PC-3 (cell line): ENCODE measurements at regions of chr5 and their contacts with region 1.

Region 1: DNA sequence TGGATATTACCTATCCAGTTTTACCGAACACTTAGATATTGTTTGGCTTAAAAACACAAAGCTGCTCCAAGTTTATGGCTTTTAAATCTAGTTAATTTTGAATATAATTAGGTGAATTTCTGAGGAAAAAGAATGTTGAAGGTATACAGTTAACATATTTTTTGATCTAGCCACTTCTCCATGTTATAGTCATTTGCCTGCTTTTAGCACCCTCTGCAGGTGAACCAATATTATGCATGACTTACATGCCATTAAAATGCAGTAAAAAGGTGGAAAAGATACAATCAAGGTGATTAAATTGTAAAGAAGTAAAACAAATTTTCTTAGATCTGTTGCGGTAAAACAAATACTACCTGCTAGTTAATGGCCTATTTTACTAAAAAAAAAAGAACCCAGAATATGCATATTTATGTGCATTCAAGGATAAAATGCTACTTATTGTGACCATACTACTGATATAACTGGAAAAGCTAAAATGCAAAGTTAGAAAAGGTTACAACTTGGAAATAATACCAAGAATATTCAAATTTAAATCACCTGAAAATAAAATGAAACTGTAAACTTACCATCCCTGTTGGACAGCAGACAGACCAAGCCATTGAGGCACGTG is 132.1 kb downstream of the AP3B1 start:
- DNase-seq: peak; percentile 7
- ATAC-seq: no peak
- H3K4me3 ChIP-seq: no peak overlapping the region
- H3K27ac ChIP-seq: no peak overlapping the region
- H3K4me1 ChIP-seq: no peaks in the 10 kb centered on the region
- H3K27me3 ChIP-seq: no peaks in the 10 kb centered on the region
- CTCF ChIP-seq: peak; percentile 57

Region 2: GRCh38 chr5:76952795-76953536 is 1209.4 kb before region 1 on chr5 and contains the start of gene CRHBP:
- CTCF ChIA-PET with region 1: no interaction called
- POLR2A ChIA-PET with region 1: no interaction called
- intact Hi-C with region 1: no loop called
- DNase-seq: no peak
- ATAC-seq: no peak
- H3K4me3 ChIP-seq: no peak within 1 kb of the TSS
- H3K27ac ChIP-seq: no peak within 1 kb of the TSS
- H3K4me1 ChIP-seq: no peaks in the 10 kb centered on the region
- H3K27me3 ChIP-seq: no peaks in the 10 kb centered on the region
- CTCF ChIP-seq: no peak
- total RNA-seq, gene CRHBP: not detected in 2 replicates

Region 3: GRCh38 chr5:77893225-77893860 is 269.0 kb before region 1 on chr5:
- CTCF ChIA-PET with region 1: no interaction called
- POLR2A ChIA-PET with region 1: no interaction called
- intact Hi-C with region 1: no loop called
- DNase-seq: peak; percentile 97
- ATAC-seq: peak; percentile 97
- H3K4me3 ChIP-seq: 0 out of 2 replicates have a peak overlapping the region, but pooled peaks have one; percentile 15
- H3K27ac ChIP-seq: peak overlapping the region; percentile 92
- H3K4me1 ChIP-seq: peaks cover 26% of the 10 kb centered on the region
- H3K27me3 ChIP-seq: no peaks in the 10 kb centered on the region
- CTCF ChIP-seq: no peak

Region 4: GRCh38 chr5:78050888-78051287 is 111.5 kb before region 1 on chr5:
- CTCF ChIA-PET with region 1: no interaction called
- POLR2A ChIA-PET with region 1: no interaction called
- intact Hi-C with region 1: loop called (anchors 10 kb)
- DNase-seq: peak; percentile 65
- ATAC-seq: peak; percentile 99
- H3K4me3 ChIP-seq: no peak overlapping the region
- H3K27ac ChIP-seq: no peak overlapping the region
- H3K4me1 ChIP-seq: peaks cover 11% of the 10 kb centered on the region; the same call in 1 of the 2 replicates
- H3K27me3 ChIP-seq: no peaks in the 10 kb centered on the region
- CTCF ChIP-seq: no peak

Region 5: GRCh38 chr5:78126536-78126935 is 35.8 kb before region 1 on chr5:
- CTCF ChIA-PET with region 1: no interaction called
- POLR2A ChIA-PET with region 1: no interaction called
- intact Hi-C with region 1: no loop called
- DNase-seq: no peak
- ATAC-seq: no peak
- H3K4me3 ChIP-seq: no peak overlapping the region
- H3K27ac ChIP-seq: no peak overlapping the region
- H3K4me1 ChIP-seq: no peaks in the 10 kb centered on the region
- H3K27me3 ChIP-seq: no peaks in the 10 kb centered on the region
- CTCF ChIP-seq: no peak